ENCODE measurements at regions of chr5 and their contacts with region 1.

Region 1: DNA sequence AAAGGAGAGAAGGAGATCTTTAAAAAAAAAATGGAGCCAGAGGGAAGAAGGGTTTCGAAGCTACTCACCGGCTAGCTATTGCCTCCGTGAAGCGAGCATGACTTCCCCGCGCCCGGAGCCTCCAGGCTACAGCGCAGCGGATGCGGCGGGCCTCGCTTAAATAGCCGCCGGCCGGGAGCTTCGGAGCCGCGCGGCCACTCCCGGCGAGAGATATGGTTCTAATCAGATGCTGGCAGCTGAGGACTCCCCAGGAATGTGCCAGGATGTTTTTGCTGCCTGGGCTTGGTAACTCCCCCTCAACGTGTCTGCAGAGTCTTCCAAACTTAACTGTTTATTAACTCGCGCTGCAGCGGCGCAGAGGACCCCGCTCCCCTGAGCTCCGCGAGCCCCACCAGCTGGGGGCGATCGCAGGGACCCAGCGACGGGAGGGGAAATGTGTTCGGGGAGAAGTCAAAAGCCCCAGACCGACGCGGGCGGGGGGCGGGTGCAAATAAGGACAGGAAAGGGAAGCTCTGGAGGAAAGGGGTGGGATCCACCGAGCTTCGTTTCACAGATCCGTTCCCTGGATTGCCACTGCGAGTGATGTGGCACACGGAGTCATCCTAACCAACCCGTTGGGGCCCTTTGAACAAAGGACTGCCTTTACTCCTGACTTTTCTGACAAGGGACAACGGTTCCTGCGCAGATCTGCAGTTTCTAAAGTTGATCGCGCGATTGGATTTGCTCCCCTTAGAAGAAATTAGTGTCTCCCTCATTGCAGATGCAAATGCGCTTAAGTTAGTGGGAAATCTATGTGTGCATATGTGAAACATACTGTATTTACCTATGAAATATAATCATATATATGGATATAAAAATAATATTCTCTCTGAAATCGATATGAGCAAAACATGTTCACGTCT is at the start of gene DAB2:
- DNase-seq: peak; percentile 91
- total RNA-seq, gene DAB2: 28.7 TPM

Region 2: GRCh38 chr5:39376293-39376714 is 48.7 kb before region 1 on chr5:
- intact Hi-C with region 1: loop called (anchors 2 kb)
- DNase-seq: no peak

Region 3: GRCh38 chr5:39469777-39470415 is 44.9 kb after region 1 on chr5:
- intact Hi-C with region 1: loop called (anchors 5 kb)
- DNase-seq: no peak

Region 4: DNA sequence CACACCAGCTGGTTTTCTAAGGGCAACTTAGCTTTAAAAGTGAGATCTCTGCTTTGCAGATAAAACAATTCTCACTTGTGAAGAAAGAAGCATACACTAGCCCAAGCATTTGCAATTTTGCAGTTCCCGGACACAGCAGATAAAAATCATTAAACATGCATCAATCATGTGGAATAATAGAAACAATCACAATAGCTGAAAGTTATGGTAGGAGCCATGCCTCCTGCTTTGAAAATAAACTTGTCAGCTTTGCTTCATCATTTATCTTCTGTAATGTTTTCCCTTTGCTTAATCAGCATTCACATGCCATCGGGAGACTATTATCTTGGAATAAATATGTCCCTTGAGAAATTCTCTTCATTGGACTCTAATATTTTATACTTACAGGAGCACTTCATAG is 60.1 kb after region 1 on chr5:
- intact Hi-C with region 1: no loop called
- DNase-seq: no peak

Region 5: DNA sequence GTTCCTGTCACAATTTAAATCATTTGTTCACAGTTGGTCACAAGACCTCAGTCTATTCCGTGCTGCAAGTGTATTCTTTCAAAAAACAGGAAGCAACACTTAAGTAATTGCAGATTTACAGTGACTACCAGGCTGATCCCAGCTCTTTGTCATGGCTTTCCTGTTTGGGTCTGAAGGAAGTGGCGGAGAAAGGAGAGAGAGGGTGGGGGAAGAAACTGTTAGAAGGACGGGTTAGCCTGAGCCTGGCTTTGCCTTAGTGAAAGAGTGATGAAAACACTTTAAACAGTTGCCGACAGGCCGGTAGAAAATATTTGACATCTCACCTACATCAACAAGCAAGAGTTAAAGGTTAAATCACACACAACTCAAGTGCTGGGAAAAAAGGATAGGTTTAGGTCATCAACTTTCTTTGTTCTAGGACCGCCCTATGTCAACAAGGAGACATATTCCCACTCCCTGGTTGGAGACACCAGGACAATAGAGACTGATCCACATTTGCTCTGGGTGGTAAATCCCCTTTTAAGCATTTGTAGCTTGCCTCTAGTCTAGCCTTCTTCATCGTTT is 102.0 kb after region 1 on chr5:
- intact Hi-C with region 1: loop called (anchors 2 kb)
- DNase-seq: no peak

Region 6: DNA sequence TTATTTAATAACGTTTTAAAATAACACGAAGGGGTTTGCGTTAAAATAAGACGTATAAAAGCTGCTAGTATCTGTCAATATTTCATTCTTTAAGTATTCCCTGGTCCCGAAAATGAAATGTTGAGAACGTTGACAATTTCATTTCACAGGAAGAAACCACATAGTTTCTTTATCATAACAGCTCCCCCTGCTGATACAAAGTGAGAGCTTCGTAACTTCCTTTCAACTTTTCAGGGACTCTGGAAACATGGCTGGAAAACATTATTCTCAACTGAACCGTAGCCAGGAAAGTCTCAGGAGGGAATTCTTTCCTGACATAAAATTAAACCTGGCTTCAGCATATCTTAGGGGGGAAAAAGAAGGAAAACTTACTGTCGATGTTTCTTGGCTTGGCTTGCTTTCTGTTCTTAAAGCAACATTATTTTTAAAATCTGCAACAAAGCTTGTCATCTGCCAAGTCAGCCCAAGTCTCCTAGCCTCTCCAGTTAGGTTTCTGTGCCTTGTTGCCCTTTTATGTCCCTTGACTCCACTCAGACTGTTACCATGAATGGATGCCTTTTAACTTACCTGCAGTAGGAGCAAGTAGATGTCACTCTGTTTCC is 122.7 kb after region 1 on chr5:
- intact Hi-C with region 1: loop called (anchors 2 kb)
- DNase-seq: no peak

Measured in cardiac septum (tissue), 1 donor.